Activated CD8-positive, alpha-beta T cell treated with anti-CD3 and anti-CD28 coated beads, Interleukin-2, amount 10 ng/mL, durations not matched to agents 7 days and 5 days (primary cell): ENCODE measurements at regions of chr17 and their contacts with region 1.

Region 1: DNA sequence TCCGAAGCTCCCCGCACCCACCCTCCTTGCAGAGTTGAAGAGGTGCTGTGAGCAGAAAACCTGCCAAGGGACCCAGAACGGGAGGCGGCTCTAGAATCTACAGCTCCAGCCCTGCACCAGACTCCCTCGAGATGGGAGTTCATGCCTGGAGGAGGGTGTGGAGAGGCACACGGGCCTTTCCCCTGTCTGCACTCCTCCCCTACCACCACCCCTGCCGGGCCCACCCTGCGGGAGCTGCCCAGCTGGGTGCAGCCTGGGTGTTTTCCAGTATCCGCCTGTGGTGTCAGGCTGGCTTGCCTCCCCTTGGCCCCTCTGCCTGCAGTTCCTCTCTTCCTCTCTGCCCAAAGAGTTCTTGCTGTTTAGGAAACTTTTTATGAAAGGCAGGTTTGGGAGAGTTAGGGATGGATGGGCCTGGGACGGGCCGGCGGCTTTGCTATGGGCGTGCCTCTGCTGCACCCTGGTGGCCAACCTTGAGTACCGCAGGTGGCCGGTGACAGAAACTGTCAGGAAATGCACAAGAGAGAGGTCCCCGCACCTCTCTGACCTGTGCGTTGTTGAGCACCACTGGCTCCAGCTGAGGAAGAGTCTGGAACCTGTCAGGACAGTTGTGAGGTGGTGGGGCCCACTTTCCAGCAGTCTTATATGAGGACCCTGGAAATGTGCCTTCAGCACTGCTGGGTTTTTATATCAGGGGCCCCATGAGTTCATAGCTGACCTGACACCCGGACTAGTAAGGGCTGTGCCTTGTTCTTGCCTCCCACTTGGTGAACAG is 354.1 kb downstream of the SEC14L1 start:
- DNase-seq: peak; percentile 83
- ATAC-seq: peak; percentile 66
- H3K4me3 Mint-ChIP-seq: no peak overlapping the region
- H3K27ac Mint-ChIP-seq: peak overlapping the region; percentile 78
- H3K4me1 Mint-ChIP-seq: peaks cover 40% of the 10 kb centered on the region
- H3K27me3 Mint-ChIP-seq: no peaks in the 10 kb centered on the region

Region 2: GRCh38 chr17:77437017-77437416 is 57.8 kb before region 1 on chr17:
- CTCF ChIA-PET with region 1: interaction called, 20 read pairs
- POLR2A ChIA-PET with region 1: no interaction called
- DNase-seq: no peak
- ATAC-seq: no peak
- H3K4me3 Mint-ChIP-seq: peak overlapping the region; percentile 87
- H3K27ac Mint-ChIP-seq: peak overlapping the region; percentile 91
- H3K4me1 Mint-ChIP-seq: peaks cover 95% of the 10 kb centered on the region
- H3K27me3 Mint-ChIP-seq: no peaks in the 10 kb centered on the region

Region 3: GRCh38 chr17:77451245-77451893 is 43.5 kb before region 1 on chr17:
- CTCF ChIA-PET with region 1: interaction called, 12 read pairs
- POLR2A ChIA-PET with region 1: no interaction called
- DNase-seq: peak; percentile 82
- ATAC-seq: peak; percentile 62
- H3K4me3 Mint-ChIP-seq: peak overlapping the region; percentile 85
- H3K27ac Mint-ChIP-seq: peak overlapping the region; percentile 93
- H3K4me1 Mint-ChIP-seq: peaks cover 64% of the 10 kb centered on the region
- H3K27me3 Mint-ChIP-seq: no peaks in the 10 kb centered on the region

Region 4: GRCh38 chr17:77571155-77571981 is 76.5 kb after region 1 on chr17:
- CTCF ChIA-PET with region 1: no interaction called
- POLR2A ChIA-PET with region 1: no interaction called
- DNase-seq: peak; percentile 35
- ATAC-seq: peak; percentile 60
- H3K4me3 Mint-ChIP-seq: no peak overlapping the region
- H3K27ac Mint-ChIP-seq: no peak overlapping the region
- H3K4me1 Mint-ChIP-seq: peaks cover 8% of the 10 kb centered on the region
- H3K27me3 Mint-ChIP-seq: peaks cover 41% of the 10 kb centered on the region